ENCODE measurements at regions of chr12 and their contacts with region 1.

Region 1: GRCh38 chr12:57452937-57453509 is 2.1 kb upstream of the INHBE start:
- DNase-seq: peak; percentile 82 to 87
- H3K4me3 ChIP-seq: no peak overlapping the region
- H3K4me3 Mint-ChIP-seq: no peak overlapping the region
- H3K27ac Mint-ChIP-seq: peak overlapping the region; percentile 30
- H3K4me1 ChIP-seq: peaks cover 35% of the 10 kb centered on the region
- H3K4me1 Mint-ChIP-seq: peaks cover 22% of the 10 kb centered on the region
- H3K27me3 ChIP-seq: no peaks in the 10 kb centered on the region
- H3K27me3 Mint-ChIP-seq: no peaks in the 10 kb centered on the region
- CTCF ChIP-seq: peak; percentile 80 to 92

Region 2: DNA sequence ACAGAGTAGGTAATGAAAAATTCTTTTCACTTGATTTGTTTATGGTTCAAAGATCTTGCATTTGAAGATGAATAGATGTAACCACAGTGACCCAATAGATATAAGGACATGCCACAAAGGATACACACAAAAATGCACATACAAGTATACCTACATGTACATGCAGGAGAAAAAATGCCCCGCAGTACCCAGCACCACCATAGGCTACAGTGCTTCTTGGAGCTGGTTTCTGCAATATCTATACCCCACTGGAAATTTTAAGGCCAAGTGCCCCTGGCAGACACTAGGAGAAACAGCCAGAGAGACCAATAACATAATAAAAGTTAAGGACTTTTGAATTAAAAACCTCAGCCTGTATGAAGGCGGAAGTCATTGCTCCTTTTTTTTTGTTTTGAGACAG is 189.9 kb before region 1 on chr12:
- CTCF ChIA-PET with region 1: interaction called, 4 read pairs
- POLR2A ChIA-PET with region 1: no interaction called
- intact Hi-C with region 1: loop called (anchors 1 kb)
- DNase-seq: no peak
- H3K4me3 ChIP-seq: no peak overlapping the region
- H3K4me3 Mint-ChIP-seq: no peak overlapping the region
- H3K27ac Mint-ChIP-seq: no peak overlapping the region
- H3K4me1 ChIP-seq: no peaks in the 10 kb centered on the region
- H3K4me1 Mint-ChIP-seq: no peaks in the 10 kb centered on the region
- H3K27me3 ChIP-seq: no peaks in the 10 kb centered on the region
- H3K27me3 Mint-ChIP-seq: no peaks in the 10 kb centered on the region
- CTCF ChIP-seq: no peak

Region 3: DNA sequence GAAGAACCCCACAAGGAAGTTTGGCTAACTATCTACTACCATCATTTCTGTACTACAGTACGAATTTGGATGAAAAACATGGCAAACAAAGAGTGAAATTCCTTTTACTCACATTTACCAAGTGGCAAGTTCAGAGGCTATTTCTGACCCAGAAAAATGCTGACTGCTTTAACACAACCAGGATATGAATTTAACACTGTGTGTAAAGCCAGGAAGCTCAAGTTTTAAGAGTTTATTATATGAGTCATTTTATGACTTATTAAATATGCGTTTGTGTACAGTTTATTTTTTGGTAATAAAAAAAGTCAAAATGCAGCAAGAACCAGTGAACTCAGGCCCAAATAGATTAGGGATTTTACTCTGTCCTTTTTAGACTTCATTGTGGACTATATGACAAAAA is 143.6 kb before region 1 on chr12:
- CTCF ChIA-PET with region 1: interaction called, 138 read pairs
- POLR2A ChIA-PET with region 1: no interaction called
- intact Hi-C with region 1: loop called (anchors 1 kb)
- DNase-seq: no peak
- H3K4me3 ChIP-seq: no peak overlapping the region
- H3K4me3 Mint-ChIP-seq: no peak overlapping the region
- H3K27ac Mint-ChIP-seq: no peak overlapping the region
- H3K4me1 ChIP-seq: no peaks in the 10 kb centered on the region
- H3K4me1 Mint-ChIP-seq: no peaks in the 10 kb centered on the region
- H3K27me3 ChIP-seq: no peaks in the 10 kb centered on the region
- H3K27me3 Mint-ChIP-seq: no peaks in the 10 kb centered on the region
- CTCF ChIP-seq: no peak

Region 4: DNA sequence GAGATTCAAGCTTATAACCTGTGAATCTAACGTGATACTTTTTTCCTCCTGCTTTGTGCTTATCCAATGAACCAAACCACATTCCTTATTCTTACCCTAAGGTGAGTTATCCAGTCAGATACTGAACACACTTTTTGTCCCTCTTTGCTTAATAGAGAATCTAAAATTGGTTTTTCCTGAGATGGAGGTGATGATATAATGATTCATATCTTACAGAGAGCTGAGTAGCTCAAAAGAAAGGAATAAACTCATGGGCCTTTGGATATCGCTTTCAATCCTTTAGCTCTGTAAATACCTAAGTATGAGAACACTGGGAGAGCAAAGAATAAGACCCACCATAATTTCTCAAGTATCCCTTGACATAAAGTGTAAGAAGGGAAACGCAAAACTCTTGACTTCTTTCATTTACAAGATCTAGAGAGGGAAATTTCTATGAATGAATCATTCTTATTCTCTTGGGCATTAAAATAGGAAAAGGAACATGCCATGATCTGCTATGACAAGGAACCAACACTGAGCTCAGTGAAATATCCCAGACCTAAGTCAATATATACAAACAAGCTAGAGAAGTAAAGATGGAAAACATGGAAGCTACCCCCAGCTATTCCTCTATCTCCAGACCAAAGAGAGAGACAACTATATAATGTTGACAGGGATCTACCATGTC is 120.2 kb before region 1 on chr12:
- CTCF ChIA-PET with region 1: interaction called, 14 read pairs
- POLR2A ChIA-PET with region 1: no interaction called
- intact Hi-C with region 1: no loop called
- DNase-seq: no peak
- H3K4me3 ChIP-seq: no peak overlapping the region
- H3K4me3 Mint-ChIP-seq: no peak overlapping the region
- H3K27ac Mint-ChIP-seq: no peak overlapping the region
- H3K4me1 ChIP-seq: no peaks in the 10 kb centered on the region
- H3K4me1 Mint-ChIP-seq: no peaks in the 10 kb centered on the region
- H3K27me3 ChIP-seq: no peaks in the 10 kb centered on the region
- H3K27me3 Mint-ChIP-seq: no peaks in the 10 kb centered on the region
- CTCF ChIP-seq: no peak

Region 5: GRCh38 chr12:57368349-57369095 is 84.5 kb before region 1 on chr12:
- CTCF ChIA-PET with region 1: interaction called, 22 read pairs
- POLR2A ChIA-PET with region 1: interaction called, 4 read pairs
- intact Hi-C with region 1: loop called (anchors 1 kb)
- DNase-seq: peak; percentile 86 to 91
- H3K4me3 ChIP-seq: no peak overlapping the region
- H3K4me3 Mint-ChIP-seq: peak overlapping the region; percentile 34
- H3K27ac Mint-ChIP-seq: peak overlapping the region; percentile 90
- H3K4me1 ChIP-seq: peaks cover 37% of the 10 kb centered on the region
- H3K4me1 Mint-ChIP-seq: peaks cover 18% of the 10 kb centered on the region
- H3K27me3 ChIP-seq: no peaks in the 10 kb centered on the region
- H3K27me3 Mint-ChIP-seq: no peaks in the 10 kb centered on the region
- CTCF ChIP-seq: no peak

Region 6: GRCh38 chr12:57430931-57431720 is 21.9 kb before region 1 on chr12 and contains the start of gene R3HDM2:
- CTCF ChIA-PET with region 1: interaction called, 11 read pairs
- POLR2A ChIA-PET with region 1: interaction called, 3 read pairs
- intact Hi-C with region 1: loop called (anchors 1 kb)
- DNase-seq: peak; percentile 96
- H3K4me3 ChIP-seq: peak within 1 kb of the TSS; percentile 49
- H3K4me3 Mint-ChIP-seq: peak within 1 kb of the TSS; percentile 81
- H3K27ac Mint-ChIP-seq: peak within 1 kb of the TSS; percentile 96
- H3K4me1 ChIP-seq: peaks cover 9% of the 10 kb centered on the region
- H3K4me1 Mint-ChIP-seq: peaks cover 13% of the 10 kb centered on the region
- H3K27me3 ChIP-seq: no peaks in the 10 kb centered on the region
- H3K27me3 Mint-ChIP-seq: no peaks in the 10 kb centered on the region
- CTCF ChIP-seq: no peak
- total RNA-seq, gene R3HDM2: 33.7 and 36.2 TPM in 2 replicates

Measured in Caco-2 (cell line).